ENCODE measurements at regions of chr4 and their contacts with region 1.

Region 1: DNA sequence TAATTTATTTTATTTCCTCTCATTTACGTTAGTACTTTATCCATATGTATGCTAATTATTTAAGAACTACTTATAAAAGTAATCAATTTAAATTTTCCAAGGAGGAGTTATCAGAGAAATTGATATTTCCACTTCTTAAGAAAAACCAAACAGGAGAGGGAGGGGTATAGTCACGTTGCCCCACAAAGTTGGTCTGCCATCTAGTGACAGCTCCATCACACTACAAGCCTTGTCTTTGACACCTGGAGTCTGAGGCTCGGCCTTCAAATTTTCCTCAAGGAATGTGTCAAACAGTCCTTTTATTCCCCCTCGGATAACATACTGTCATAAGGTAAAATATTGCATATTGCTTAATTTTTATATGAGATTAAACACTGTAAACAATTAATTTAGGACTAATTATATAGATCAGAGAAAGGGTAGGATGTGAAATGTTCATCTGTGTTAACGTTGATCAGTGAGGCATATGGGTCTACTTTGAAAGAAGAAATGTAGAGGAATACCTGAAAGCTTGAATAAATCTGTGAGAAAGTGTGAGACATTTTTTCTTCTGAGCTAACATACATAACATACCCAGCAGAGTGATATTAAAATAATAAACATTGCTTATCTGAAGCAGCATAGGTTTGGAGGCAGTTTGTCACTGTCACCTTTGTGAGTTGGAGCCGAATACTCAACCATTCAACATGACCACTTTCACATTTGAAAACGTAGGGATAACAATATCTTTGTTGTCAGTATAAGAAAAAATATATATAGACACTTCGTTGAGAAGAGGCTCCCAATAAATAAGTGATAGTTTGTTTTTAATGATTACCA is 114.4 kb downstream of the GLRA3 start:
- DNase-seq: peak; percentile 63
- H3K4me3 ChIP-seq: no peak overlapping the region
- H3K27ac ChIP-seq: no peak overlapping the region
- H3K4me1 ChIP-seq: no peaks in the 10 kb centered on the region
- H3K27me3 ChIP-seq: 0 out of 2 replicates have a peak, but pooled peaks cover 2% of the 10 kb centered on the region

Region 2: DNA sequence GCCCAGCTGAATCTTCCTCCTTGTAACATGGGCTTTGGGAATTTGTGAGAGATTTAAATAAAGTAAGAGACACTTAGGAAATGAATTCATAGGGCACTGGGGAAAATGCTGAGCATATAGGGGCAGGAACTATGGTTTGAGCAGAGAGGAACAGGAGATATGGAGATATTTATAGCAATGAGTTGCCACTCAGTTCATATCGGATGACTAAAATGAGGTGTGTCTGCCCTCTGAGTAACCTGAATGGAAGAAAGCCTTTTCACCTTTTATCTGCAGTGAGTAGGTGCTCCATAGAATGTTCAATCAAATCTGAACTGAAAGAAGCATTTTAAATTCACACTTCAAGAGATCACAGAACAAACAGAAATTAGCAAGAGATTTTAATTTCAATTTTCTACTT is 325.2 kb before region 1 on chr4:
- in situ Hi-C with region 1: loop called (anchors 10 kb)
- DNase-seq: no peak
- H3K4me3 ChIP-seq: no peak overlapping the region
- H3K27ac ChIP-seq: no peak overlapping the region
- H3K4me1 ChIP-seq: peaks cover 2% of the 10 kb centered on the region; the same call in 1 of the 2 replicates
- H3K27me3 ChIP-seq: 0 out of 2 replicates have a peak, but pooled peaks cover 19% of the 10 kb centered on the region

Region 3: DNA sequence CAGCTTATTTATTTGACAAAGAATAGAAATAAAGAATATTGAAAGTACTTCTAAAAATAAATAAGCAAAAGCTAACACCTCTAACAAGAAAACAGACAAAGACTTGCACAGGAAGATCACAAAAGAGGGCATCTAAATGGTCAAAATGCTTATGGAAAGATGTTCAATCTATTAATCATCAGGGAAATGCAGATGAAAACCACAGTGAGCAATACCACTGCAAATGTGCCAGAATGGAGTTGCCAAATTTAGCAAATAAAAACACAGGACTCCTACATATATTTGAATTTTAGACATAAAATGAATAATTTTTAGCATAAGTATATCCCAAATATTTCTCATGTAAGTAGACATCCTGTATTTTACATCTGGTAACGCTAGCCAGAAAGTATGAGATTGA is 136.2 kb before region 1 on chr4:
- in situ Hi-C with region 1: no loop called
- DNase-seq: peak; percentile 70
- H3K4me3 ChIP-seq: no peak overlapping the region
- H3K27ac ChIP-seq: no peak overlapping the region
- H3K4me1 ChIP-seq: peaks cover 23% of the 10 kb centered on the region
- H3K27me3 ChIP-seq: no peaks in the 10 kb centered on the region